GM12878 (cell line): ENCODE measurements at regions of chr1 and their contacts with region 1.

Region 1: GRCh38 chr1:238701024-238701423 is 685.3 kb upstream of the CHRM3 start:
- DNase-seq: no peak
- ATAC-seq: no peak
- H3K4me3 ChIP-seq: no peak overlapping the region
- H3K27ac ChIP-seq: no peak overlapping the region
- H3K4me1 ChIP-seq: no peaks in the 10 kb centered on the region
- H3K27me3 ChIP-seq: no peaks in the 10 kb centered on the region
- CTCF ChIP-seq: no peak
- EP300 ChIP-seq: no peak
- POLR2A ChIP-seq: no peak
- RAD21 ChIP-seq: no peak

Region 2: GRCh38 chr1:238621405-238621804 is 79.6 kb before region 1 on chr1:
- CTCF ChIA-PET with region 1: no interaction called
- POLR2A ChIA-PET with region 1: no interaction called
- RAD21 ChIA-PET with region 1: no interaction called
- SMC1A ChIA-PET with region 1: no interaction called
- in situ Hi-C with region 1: no loop called
- intact Hi-C with region 1: no loop called
- DNase-seq: no peak
- ATAC-seq: no peak
- H3K4me3 ChIP-seq: no peak overlapping the region
- H3K27ac ChIP-seq: no peak overlapping the region
- H3K4me1 ChIP-seq: no peaks in the 10 kb centered on the region
- H3K27me3 ChIP-seq: no peaks in the 10 kb centered on the region
- CTCF ChIP-seq: no peak
- EP300 ChIP-seq: no peak
- POLR2A ChIP-seq: no peak
- RAD21 ChIP-seq: no peak

Region 3: DNA sequence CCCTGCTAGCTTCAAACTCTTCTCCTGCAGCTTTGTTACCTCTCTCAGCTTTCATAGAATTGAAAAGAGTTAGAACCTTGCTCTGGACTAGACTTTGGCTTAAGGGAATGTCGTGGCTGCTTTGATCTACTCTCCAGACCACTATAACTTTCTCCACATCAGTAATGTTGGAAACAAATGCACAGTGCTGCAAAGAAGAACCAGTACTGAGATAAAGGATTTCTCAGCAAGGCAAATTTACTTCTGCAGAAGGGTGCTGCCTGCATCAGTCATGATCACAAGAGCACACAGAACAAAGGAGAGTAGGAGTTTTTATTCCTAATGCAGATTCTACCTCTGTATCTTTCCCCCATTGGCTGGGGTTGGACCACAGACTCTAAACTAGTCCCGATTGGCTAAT is 63.8 kb after region 1 on chr1:
- CTCF ChIA-PET with region 1: interaction called, 3 read pairs
- POLR2A ChIA-PET with region 1: no interaction called
- RAD21 ChIA-PET with region 1: no interaction called
- SMC1A ChIA-PET with region 1: no interaction called
- in situ Hi-C with region 1: no loop called
- intact Hi-C with region 1: loop called (anchors 2 kb)
- DNase-seq: no peak
- ATAC-seq: no peak
- H3K4me3 ChIP-seq: no peak overlapping the region
- H3K27ac ChIP-seq: no peak overlapping the region
- H3K4me1 ChIP-seq: no peaks in the 10 kb centered on the region
- H3K27me3 ChIP-seq: no peaks in the 10 kb centered on the region
- CTCF ChIP-seq: no peak
- EP300 ChIP-seq: no peak
- POLR2A ChIP-seq: no peak
- RAD21 ChIP-seq: no peak

Region 4: DNA sequence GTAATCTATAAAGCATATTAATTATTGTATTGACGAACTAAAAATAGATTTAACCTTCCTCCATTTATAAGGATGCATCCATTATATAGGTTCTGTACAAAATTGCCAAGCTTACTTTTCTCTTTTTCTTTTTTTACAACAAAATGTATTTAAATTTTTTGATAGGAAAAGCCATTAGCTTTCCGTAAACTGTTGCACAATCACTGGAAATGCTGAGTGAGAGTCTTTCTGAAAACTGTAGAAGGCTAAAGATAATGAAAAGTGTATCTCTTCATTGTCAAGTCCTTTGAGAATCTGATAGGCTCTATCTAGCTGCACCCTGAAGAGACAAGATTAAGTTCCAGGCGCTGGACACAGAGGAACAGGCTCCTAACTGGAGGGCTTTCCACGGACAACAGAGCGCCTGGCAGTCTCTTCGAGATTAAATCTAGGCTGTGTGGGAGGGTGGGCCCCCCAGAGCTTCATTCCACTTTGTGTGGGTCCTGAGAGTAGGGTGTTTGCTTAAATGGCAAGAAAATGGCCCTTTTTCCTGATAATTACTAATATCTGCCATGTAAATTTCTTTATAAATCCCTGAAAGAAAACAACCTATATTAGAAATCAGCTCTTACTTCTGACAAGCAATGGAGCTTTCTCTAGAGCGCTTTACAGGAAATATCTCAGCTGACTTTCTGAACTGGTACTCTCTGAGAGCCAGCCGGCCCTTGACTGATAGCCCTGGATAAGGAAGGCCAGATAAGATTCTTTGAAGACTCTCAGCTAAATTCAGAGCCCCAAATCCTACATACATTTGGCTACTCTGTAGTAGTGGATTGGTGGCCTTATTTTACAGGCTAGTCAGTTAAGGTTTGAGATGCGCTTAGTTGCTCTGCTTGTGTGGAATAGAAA is 1499.0 kb after region 1 on chr1:
- CTCF ChIA-PET with region 1: no interaction called
- POLR2A ChIA-PET with region 1: no interaction called
- RAD21 ChIA-PET with region 1: no interaction called
- SMC1A ChIA-PET with region 1: no interaction called
- in situ Hi-C with region 1: no loop called
- intact Hi-C with region 1: no loop called
- DNase-seq: no peak
- ATAC-seq: no peak
- H3K4me3 ChIP-seq: no peak overlapping the region
- H3K27ac ChIP-seq: no peak overlapping the region
- H3K4me1 ChIP-seq: no peaks in the 10 kb centered on the region
- H3K27me3 ChIP-seq: no peaks in the 10 kb centered on the region
- CTCF ChIP-seq: no peak
- EP300 ChIP-seq: no peak
- POLR2A ChIP-seq: no peak
- RAD21 ChIP-seq: no peak